Aorta (tissue), 5 donors: ENCODE measurements at regions of chr1 and their contacts with region 1.

Region 1: DNA sequence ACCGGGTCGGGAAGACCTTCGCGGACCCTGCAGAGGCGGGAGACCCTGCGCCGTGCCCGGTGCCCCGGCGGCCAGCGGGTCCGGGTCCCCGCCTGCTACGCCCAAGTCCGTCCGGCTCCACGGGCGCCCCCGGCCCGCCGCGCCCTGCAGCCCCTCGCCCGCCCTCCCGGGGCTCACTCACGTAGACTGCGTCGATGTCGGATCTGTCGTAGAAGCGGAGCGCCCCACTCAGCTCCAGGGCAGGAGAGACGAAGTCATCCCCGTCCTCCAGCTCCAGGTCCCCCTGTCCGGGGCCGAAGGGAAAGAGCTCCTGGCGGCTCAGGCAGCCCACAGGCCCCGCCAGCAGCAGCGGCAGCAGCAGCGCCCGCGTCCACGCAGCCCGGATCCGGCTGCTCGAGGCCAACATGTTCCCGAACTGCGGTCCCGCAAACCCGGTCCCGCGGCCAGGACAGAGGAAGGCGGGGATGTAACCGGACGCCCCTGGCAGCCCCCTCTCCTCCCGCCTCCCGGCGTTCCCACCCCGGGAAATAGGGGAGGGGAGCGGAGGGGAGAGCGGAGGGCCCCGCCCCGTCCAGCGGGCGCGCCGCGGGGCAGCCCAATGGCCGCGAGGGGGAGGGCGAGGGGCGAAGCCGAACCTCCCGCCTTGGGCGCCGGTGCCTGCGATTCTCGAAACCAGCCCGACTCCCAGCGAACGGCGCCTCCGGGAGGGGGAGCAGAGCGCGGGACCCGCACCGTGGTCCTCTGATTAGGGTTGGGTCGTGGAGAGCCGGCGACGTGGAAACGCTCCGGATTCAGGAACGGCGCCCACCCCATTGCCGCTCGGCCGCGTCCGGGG is at the start of gene NID1:
- DNase-seq: peak; percentile 87 to 95
- ATAC-seq: peak; percentile 95
- H3K4me3 ChIP-seq: peak within 1 kb of the TSS; percentile 33 to 70
- H3K27ac ChIP-seq: peak within 1 kb of the TSS; percentile 23 to 49
- H3K4me1 ChIP-seq: no peaks in the 10 kb centered on the region
- H3K27me3 ChIP-seq: no peaks in the 10 kb centered on the region
- total RNA-seq, gene NID1: 63.3 to 69.5 TPM

Region 2: GRCh38 chr1:235442788-235443429 is 622.0 kb before region 1 on chr1:
- intact Hi-C with region 1: no loop called
- DNase-seq: no peak
- ATAC-seq: no peak
- H3K4me3 ChIP-seq: no peak overlapping the region
- H3K27ac ChIP-seq: no peak overlapping the region
- H3K4me1 ChIP-seq: no peaks in the 10 kb centered on the region
- H3K27me3 ChIP-seq: no peaks in the 10 kb centered on the region

Region 3: GRCh38 chr1:235504496-235505222 is 560.2 kb before region 1 on chr1:
- intact Hi-C with region 1: loop called in 1 of 2 experiments (anchors 10 kb)
- DNase-seq: peak; percentile 99 to 100
- ATAC-seq: peak; percentile 98
- H3K4me3 ChIP-seq: peak overlapping the region; percentile 46 to 96
- H3K27ac ChIP-seq: peak overlapping the region; percentile 93 to 96
- H3K4me1 ChIP-seq: peaks cover 0 to 4% of the 10 kb centered on the region in 2 donors
- H3K27me3 ChIP-seq: no peaks in the 10 kb centered on the region

Region 4: DNA sequence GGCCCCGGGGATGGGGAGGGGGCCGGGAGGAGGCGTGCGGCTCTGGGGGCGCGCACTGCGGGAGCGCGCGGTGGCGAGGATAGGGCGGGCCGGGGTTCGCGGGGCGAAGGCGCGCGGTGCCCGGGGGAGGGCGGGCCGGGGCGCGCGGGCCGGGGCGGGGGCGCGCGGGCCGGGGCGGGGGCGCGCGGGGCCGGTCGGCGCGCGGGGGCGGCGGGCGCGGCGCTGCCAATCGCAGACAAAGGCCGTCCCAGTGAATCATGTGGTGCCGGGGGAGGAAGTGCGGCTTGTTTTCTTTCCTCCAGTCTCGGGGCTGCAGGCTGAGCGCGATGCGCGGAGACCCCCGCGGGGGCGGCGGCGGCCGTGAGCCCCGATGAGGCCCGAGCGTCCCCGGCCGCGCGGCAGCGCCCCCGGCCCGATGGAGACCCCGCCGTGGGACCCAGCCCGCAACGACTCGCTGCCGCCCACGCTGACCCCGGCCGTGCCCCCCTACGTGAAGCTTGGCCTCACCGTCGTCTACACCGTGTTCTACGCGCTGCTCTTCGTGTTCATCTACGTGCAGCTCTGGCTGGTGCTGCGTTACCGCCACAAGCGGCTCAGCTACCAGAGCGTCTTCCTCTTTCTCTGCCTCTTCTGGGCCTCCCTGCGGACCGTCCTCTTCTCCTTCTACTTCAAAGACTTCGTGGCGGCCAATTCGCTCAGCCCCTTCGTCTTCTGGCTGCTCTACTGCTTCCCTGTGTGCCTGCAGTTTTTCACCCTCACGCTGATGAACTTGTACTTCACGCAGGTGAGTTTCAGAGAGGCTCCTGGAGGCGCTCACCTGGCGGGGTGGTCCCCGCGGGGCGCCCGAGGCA is 77.6 kb after region 1 on chr1 and contains the start of gene GPR137B:
- intact Hi-C with region 1: no loop called
- DNase-seq: peak; percentile 79 to 82
- ATAC-seq: peak; percentile 54
- H3K4me3 ChIP-seq: peak within 1 kb of the TSS; percentile 75 to 77
- H3K27ac ChIP-seq: no peak within 1 kb of the TSS
- H3K4me1 ChIP-seq: no peaks in the 10 kb centered on the region
- H3K27me3 ChIP-seq: peaks cover 0 to 2% of the 10 kb centered on the region in 2 donors
- total RNA-seq, gene GPR137B: 19.2 to 21.3 TPM

Region 5: DNA sequence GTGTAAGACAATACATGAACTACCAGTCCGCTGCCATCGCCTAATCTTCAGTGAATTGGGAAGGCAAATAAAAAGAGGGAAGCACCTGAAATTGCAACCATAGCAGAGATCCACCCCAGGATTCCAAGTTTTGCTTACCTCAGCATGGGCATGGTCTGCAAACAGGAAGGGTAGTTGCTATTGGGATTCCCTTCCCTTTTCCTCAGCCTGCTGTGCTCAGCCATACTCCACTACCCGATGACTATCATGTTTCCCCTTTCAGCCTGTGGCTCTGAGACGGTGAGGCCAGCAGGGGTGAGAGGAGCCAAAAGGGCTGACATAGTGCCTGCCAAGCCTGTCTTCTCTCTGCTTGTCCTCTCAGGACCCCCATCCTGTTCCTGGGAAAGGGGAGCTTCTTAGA is 141.7 kb after region 1 on chr1:
- intact Hi-C with region 1: no loop called
- DNase-seq: peak in 1 of 2 donors; percentile 71
- ATAC-seq: peak; percentile 60
- H3K4me3 ChIP-seq: no peak overlapping the region
- H3K27ac ChIP-seq: no peak overlapping the region
- H3K4me1 ChIP-seq: no peaks in the 10 kb centered on the region
- H3K27me3 ChIP-seq: no peaks in the 10 kb centered on the region